WTC11 (cell line): ENCODE measurements at regions of chr4 and their contacts with region 1.

Region 1: DNA sequence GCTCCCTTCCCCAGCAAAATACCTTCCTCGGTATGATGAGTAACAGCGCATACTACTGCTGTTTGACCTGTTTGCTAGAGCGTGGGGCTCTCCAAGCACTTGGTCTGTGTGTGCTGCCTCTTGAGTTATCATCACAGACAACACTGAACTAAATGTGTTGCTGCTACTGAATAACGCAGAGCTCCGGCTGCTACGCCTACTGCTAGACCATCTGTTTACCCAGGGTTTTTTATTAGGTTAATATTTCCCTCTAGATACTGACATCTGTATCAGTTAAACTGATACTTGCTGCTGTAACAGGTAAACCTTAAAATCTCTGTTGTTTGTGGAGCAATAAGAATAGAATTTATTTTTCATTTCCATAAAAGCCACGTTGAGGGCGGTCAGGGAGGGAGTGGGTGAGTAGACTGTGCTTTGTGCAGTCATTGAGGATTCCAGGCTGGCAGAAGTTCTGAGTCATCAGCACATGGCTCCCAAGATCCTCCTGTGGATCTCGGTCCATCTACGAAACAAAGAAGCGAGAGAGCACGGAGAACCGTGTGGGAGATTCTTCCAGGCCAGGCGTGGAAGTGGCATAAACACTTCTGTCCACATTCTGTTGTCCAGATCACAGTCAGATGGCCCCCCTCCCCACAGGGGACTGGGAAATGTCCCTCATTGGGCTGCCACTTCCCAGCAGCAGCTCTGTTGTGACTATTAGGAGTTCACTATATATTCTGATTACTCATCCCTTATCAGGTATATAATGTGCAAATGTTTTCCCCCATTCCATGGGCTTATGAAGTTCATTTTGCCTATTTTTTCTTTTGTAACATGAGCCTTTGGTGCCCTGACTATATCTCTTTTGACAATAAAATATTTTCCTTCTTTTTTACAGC is 14.1 kb downstream of the GRK4 start:
- DNase-seq: no peak
- ATAC-seq: no peak
- H3K4me3 Mint-ChIP-seq: no peak overlapping the region
- H3K27ac Mint-ChIP-seq: no peak overlapping the region
- H3K4me1 Mint-ChIP-seq: no peaks in the 10 kb centered on the region
- H3K27me3 Mint-ChIP-seq: no peaks in the 10 kb centered on the region; the same call in 1 of the 2 replicates
- CTCF ChIP-seq: no peak

Region 2: DNA sequence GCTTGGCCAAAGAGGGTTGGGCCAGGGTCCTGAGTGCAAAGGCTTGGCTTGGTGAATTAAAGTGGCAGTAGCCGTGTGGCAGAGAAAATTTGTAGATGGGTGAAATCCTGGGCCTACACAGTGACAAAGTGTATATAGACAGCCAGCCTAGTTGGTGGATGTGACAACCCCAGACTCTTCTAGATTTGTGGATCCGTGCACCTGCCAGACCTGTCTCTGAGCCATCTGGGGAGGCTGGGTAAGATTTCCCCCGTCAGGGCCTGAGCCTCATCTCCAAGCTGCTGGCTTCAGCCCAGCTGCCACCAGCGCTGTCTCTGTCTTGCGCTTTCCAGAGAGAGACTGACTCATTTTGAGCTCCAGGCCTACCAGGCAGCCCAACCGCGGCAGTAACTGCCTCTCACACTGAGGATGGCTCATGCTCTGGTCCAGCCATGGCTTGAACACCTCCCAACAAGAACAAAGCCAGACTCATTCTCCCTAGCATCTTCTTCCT is 40.8 kb before region 1 on chr4:
- CTCF ChIA-PET with region 1: no interaction called
- POLR2A ChIA-PET with region 1: no interaction called
- DNase-seq: no peak
- ATAC-seq: no peak
- H3K4me3 Mint-ChIP-seq: peak overlapping the region; percentile 80
- H3K27ac Mint-ChIP-seq: peak overlapping the region; percentile 51
- H3K4me1 Mint-ChIP-seq: peaks cover 26% of the 10 kb centered on the region
- H3K27me3 Mint-ChIP-seq: no peaks in the 10 kb centered on the region
- CTCF ChIP-seq: no peak

Region 3: DNA sequence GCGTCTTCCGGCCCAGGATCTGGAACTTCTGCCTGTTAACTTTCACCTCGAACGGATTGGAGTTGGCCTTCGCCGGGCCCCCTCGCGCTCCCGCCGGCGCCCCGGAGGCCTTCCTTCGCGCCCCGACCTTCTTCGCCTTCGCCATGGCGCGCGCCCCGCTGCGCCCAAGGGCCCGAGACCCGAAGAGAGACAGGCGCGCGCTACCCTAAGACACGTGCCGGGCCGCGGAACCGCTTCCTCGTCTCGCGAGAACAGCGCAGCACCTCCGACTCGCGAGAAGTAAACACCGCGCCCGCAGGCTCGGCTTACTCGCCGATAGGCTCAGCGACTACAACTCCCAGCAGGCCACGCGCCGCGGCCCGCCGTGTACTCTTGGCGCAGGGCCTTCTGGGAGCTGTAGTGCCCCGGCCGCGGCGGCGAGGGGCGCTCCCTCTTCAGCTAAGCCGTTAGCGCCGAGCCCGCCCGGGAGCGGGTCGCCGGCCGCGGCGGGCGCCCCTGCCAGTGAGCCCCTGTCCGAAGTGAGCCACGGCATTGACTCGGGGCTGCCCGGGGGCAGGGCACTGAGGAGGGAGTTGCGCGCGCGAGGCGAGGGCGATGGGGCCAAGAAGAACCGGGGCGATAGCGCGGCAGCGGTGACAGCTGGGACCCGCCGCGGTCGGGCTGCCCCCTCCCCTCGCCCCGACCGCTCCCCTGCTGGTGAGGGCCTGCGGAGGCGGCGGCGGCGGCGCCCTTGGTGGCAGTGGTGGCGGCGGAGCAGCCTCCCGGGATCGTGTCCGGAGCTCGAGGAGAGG is 14.1 kb before region 1 on chr4 and contains the starts of genes GRK4 and NOP14:
- CTCF ChIA-PET with region 1: interaction called, 24 read pairs
- POLR2A ChIA-PET with region 1: no interaction called
- DNase-seq: peak; percentile 98
- ATAC-seq: peak; percentile 91
- H3K4me3 Mint-ChIP-seq: peak within 1 kb of the TSS; percentile 82
- H3K27ac Mint-ChIP-seq: peak within 1 kb of the TSS; percentile 60
- H3K4me1 Mint-ChIP-seq: peaks cover 22% of the 10 kb centered on the region
- H3K27me3 Mint-ChIP-seq: peaks cover 17% of the 10 kb centered on the region
- CTCF ChIP-seq: no peak
- total RNA-seq, gene GRK4: 1.4 to 3.5 TPM (median 1.6 TPM) in 3 replicates
- total RNA-seq, gene NOP14: 33.9 to 39.1 TPM (median 35.7 TPM) in 3 replicates

Region 4: GRCh38 chr4:3009422-3009821 is 32.0 kb after region 1 on chr4:
- CTCF ChIA-PET with region 1: interaction called, 12 read pairs
- POLR2A ChIA-PET with region 1: no interaction called
- DNase-seq: peak; percentile 28
- ATAC-seq: peak; percentile 91
- H3K4me3 Mint-ChIP-seq: no peak overlapping the region
- H3K27ac Mint-ChIP-seq: no peak overlapping the region
- H3K4me1 Mint-ChIP-seq: no peaks in the 10 kb centered on the region
- H3K27me3 Mint-ChIP-seq: no peaks in the 10 kb centered on the region
- CTCF ChIP-seq: no peak